Pancreas (tissue), 10 donors: ENCODE measurements at regions of chr1 and their contacts with region 1.

Region 1: DNA sequence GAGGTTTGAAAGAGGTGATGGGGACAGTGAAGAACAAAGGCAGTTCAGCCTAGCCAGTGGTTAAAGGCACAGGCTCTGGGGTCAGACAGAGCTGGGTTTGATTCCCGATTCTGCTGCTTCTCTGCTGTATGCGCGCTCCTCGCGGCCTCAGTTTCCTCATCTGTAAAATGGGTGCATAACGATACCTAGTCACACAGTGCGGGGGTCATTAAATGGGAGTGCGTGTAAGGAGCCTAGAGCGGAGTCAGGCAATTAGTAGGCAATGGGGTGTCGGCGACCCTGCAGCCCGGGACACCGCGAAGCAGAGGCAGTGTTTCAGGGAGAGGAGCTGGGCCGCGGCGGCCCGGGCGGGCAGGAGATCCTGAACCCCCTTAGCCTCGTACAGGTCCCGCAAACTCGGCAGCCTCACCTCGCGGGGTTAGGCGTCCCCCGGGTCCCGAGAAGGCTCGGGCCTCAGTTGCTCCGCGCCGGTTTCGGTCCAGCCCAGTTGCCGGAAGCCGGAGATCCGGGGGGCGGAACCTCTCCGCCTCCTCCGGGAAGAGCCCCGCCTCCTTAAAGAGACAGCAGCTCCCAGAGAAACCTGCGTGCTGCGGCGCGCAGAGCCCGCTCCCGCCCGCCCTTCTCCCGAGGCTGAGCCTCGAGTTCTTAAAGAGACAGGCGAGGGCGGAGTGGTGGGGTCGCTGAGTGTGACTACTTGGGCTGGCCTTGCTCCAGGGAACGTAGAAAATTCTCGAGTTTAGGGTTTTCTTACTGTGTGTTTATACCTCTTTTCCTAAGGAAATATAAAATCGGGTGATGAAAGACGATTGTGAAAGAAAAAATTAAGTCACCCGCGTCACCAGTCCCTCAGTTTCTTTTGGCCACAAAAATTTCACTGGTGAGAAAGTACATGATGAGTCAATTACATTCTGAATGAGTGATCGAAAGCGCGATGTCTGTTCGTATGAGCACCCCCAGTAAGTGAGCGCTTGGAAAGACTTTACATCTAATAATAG is at the start of gene YIPF1:
- DNase-seq: peak; percentile 89 to 96 (median 91)
- ATAC-seq: peak; percentile 99 to 100 (median 100)
- H3K4me3 ChIP-seq: peak within 1 kb of the TSS; percentile 52 to 99 (median 87)
- H3K27ac ChIP-seq: peak within 1 kb of the TSS; percentile 27 to 82 (median 47)
- H3K4me1 ChIP-seq: peaks cover 0 to 9% (median 5%) of the 10 kb centered on the region in 3 donors
- H3K27me3 ChIP-seq: no peaks in the 10 kb centered on the region
- CTCF ChIP-seq: no peak
- total RNA-seq, gene YIPF1: 5.6 to 17.7 (median 10.9) TPM

Region 2: DNA sequence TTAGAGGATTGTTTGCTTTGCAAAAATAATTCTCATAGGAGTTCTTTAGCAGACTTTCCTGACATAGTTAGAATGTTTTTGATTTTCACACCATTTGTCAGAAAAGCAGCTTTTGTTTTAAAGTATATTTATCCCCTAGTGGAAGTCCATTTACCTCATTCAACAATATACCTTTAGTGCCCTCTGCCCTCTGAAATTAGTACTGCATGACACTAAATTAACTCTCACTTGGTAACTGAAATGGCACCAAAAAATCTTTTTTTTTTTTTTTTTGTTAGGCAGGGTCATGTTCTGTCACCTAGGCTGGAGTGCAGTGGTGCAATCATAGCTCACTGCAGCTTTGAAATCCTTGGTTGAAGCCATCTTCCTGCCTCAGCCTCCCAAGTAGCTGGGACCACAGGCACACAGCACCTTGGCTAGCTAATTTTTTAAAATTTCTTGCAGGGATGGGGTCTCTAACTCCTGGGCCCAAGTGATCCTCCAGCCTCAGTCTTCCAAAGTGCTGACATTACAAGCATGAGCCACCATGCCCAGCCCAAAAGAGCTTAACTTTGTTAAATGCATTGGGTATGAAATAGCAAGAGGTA is 70.2 kb after region 1 on chr1:
- intact Hi-C with region 1: loop called in 1 of 3 experiments (anchors 5 kb)
- DNase-seq: no peak
- ATAC-seq: peak in 3 of 4 donors; percentile 59 to 78 (median 72)
- H3K4me3 ChIP-seq: no peak overlapping the region
- H3K27ac ChIP-seq: no peak overlapping the region
- H3K4me1 ChIP-seq: peaks cover 0 to 6% (median 4%) of the 10 kb centered on the region in 3 donors
- H3K27me3 ChIP-seq: no peaks in the 10 kb centered on the region
- CTCF ChIP-seq: peak in 3 of 4 donors; percentile 33 to 49 (median 44)